ENCODE measurements at regions of chr5 and their contacts with region 1.

Region 1: GRCh38 chr5:132007399-132008165 is 3.9 kb downstream of the ACSL6 start:
- DNase-seq: peak; percentile 72 to 82 (median 75)
- H3K4me3 ChIP-seq: no peak overlapping the region
- H3K27ac ChIP-seq: no peak overlapping the region
- H3K4me1 ChIP-seq: peaks cover 0 to 5% (median 0%) of the 10 kb centered on the region in 3 donors
- H3K27me3 ChIP-seq: peaks cover 5% of the 10 kb centered on the region
- CTCF ChIP-seq: peak; percentile 83

Region 2: DNA sequence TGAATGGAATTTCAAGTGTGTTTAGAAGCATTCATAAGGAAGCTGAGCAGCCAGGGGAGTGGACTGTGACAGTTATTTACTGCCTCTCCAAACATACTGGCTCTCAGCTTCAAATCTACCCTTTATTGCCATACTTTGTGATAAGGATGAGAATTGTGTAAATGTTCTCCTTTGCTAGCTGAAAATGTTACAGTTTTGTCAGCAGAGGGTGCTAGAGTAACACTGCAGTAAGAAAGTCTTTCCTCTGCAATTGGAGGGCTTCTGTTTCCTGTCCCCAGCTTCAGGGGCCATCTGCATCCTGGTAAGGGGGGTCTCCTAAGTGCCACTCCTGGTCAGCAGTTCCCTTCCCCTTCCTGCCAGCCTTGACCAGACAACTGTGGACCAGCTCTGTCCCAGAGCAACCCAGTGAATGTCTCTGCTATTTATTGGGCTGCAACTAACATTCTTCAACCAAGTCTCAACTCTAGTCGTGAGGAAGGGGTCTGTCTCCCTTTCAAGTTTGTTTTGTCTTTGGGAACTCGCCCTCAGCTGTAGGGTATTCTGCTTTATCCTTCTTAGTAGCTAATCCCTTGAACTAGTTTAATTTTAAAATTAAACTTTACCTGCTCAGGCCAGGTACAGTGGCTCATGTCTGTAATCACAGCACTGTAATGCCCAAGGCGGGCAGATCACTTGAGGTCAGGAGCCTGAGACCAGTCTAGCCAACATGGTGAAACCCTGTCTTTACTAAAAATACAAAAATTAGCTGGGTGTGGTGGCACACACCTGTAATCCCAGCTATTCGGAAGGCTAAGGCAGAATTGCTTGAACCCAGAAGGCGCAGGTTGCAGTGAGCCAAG is 417.9 kb before region 1 on chr5:
- intact Hi-C with region 1: loop called (anchors 10 kb)
- DNase-seq: peak in 4 of 5 donors; percentile 37 to 79 (median 57)
- H3K4me3 ChIP-seq: no peak overlapping the region
- H3K27ac ChIP-seq: no peak overlapping the region
- H3K4me1 ChIP-seq: no peaks in the 10 kb centered on the region
- H3K27me3 ChIP-seq: no peaks in the 10 kb centered on the region
- CTCF ChIP-seq: peak; percentile 87

Region 3: GRCh38 chr5:131944702-131945550 is 62.7 kb before region 1 on chr5:
- intact Hi-C with region 1: no loop called
- DNase-seq: peak in 1 of 5 donors; percentile 60
- H3K4me3 ChIP-seq: no peak overlapping the region
- H3K27ac ChIP-seq: no peak overlapping the region
- H3K4me1 ChIP-seq: no peaks in the 10 kb centered on the region
- H3K27me3 ChIP-seq: no peaks in the 10 kb centered on the region
- CTCF ChIP-seq: no peak

Measured in kidney (tissue), 22 donors.